OCI-LY7 (cell line): ENCODE measurements at regions of chr4 and their contacts with region 1.

Region 1: DNA sequence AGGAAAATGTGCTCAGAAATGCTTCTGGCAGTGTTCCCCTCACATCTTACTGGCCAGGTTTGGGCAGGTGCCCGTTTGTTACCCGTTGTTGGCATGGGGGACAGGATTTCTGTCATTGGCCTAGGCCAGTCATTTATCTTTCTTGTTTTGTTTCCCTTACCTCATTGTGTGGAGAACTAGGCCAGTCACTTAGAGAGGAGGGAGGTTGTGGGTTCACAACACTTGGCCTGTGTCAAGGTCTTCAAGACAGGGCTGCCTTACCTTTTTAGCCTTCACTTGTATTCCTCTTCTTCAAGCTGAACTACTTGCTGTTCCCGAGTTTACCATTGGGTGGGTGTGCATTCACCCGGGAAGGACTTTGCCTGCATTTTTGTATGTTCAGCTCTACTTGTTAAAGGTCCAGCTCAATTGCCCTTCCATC is 17.7 kb downstream of the SNX25 start:
- DNase-seq: no peak
- H3K4me3 ChIP-seq: no peak overlapping the region
- H3K27ac ChIP-seq: no peak overlapping the region
- H3K4me1 ChIP-seq: no peaks in the 10 kb centered on the region
- CTCF ChIP-seq: peak; percentile 43; the same call in 1 of the 2 replicates

Region 2: GRCh38 chr4:184955651-184956050 is 271.5 kb before region 1 on chr4:
- CTCF ChIA-PET with region 1: no interaction called
- POLR2A ChIA-PET with region 1: no interaction called
- intact Hi-C with region 1: no loop called
- DNase-seq: no peak
- H3K4me3 ChIP-seq: no peak overlapping the region
- H3K27ac ChIP-seq: no peak overlapping the region
- H3K4me1 ChIP-seq: no peaks in the 10 kb centered on the region
- CTCF ChIP-seq: no peak

Region 3: GRCh38 chr4:185201983-185202962 is 24.9 kb before region 1 on chr4:
- CTCF ChIA-PET with region 1: no interaction called
- POLR2A ChIA-PET with region 1: no interaction called
- intact Hi-C with region 1: no loop called
- DNase-seq: peak; percentile 31
- H3K4me3 ChIP-seq: peak overlapping the region; percentile 78
- H3K27ac ChIP-seq: peak overlapping the region; percentile 76
- H3K4me1 ChIP-seq: peaks cover 38% of the 10 kb centered on the region
- CTCF ChIP-seq: no peak

Region 4: GRCh38 chr4:185369731-185370130 is 142.6 kb after region 1 on chr4:
- CTCF ChIA-PET with region 1: no interaction called
- POLR2A ChIA-PET with region 1: interaction called, 11 read pairs
- intact Hi-C with region 1: no loop called
- DNase-seq: no peak
- H3K4me3 ChIP-seq: no peak overlapping the region
- H3K27ac ChIP-seq: no peak overlapping the region
- H3K4me1 ChIP-seq: no peaks in the 10 kb centered on the region
- CTCF ChIP-seq: no peak